Activated CD4-positive, alpha-beta T cell treated with anti-CD3 and anti-CD28 coated beads for 36 hours (primary cell): ENCODE measurements at regions of chr16 and their contacts with region 1.

Region 1: GRCh38 chr16:84970447-84971127 is 40.7 kb downstream of the ZDHHC7 start:
- DNase-seq: peak; percentile 91
- ATAC-seq: peak; percentile 99
- H3K4me3 Mint-ChIP-seq: no peak overlapping the region
- H3K27ac Mint-ChIP-seq: no peak overlapping the region
- H3K4me1 Mint-ChIP-seq: peaks cover 4% of the 10 kb centered on the region
- H3K27me3 Mint-ChIP-seq: no peaks in the 10 kb centered on the region

Region 2: GRCh38 chr16:84672276-84673202 is 298.0 kb before region 1 on chr16:
- CTCF ChIA-PET with region 1: interaction called, 4 read pairs
- POLR2A ChIA-PET with region 1: no interaction called
- intact Hi-C with region 1: loop called in 1 of 2 experiments (anchors 5 kb)
- DNase-seq: peak; percentile 91
- ATAC-seq: peak; percentile 96
- H3K4me3 Mint-ChIP-seq: no peak overlapping the region
- H3K27ac Mint-ChIP-seq: no peak overlapping the region
- H3K4me1 Mint-ChIP-seq: peaks cover 7% of the 10 kb centered on the region
- H3K27me3 Mint-ChIP-seq: peaks cover 3% of the 10 kb centered on the region

Region 3: GRCh38 chr16:84754353-84754856 is 216.2 kb before region 1 on chr16:
- CTCF ChIA-PET with region 1: interaction called, 49 read pairs
- POLR2A ChIA-PET with region 1: no interaction called
- intact Hi-C with region 1: loop called (anchors 1 to 5 kb)
- DNase-seq: peak; percentile 76
- ATAC-seq: peak; percentile 78
- H3K4me3 Mint-ChIP-seq: no peak overlapping the region
- H3K27ac Mint-ChIP-seq: peak overlapping the region; percentile 49
- H3K4me1 Mint-ChIP-seq: peaks cover 84% of the 10 kb centered on the region
- H3K27me3 Mint-ChIP-seq: no peaks in the 10 kb centered on the region

Region 4: DNA sequence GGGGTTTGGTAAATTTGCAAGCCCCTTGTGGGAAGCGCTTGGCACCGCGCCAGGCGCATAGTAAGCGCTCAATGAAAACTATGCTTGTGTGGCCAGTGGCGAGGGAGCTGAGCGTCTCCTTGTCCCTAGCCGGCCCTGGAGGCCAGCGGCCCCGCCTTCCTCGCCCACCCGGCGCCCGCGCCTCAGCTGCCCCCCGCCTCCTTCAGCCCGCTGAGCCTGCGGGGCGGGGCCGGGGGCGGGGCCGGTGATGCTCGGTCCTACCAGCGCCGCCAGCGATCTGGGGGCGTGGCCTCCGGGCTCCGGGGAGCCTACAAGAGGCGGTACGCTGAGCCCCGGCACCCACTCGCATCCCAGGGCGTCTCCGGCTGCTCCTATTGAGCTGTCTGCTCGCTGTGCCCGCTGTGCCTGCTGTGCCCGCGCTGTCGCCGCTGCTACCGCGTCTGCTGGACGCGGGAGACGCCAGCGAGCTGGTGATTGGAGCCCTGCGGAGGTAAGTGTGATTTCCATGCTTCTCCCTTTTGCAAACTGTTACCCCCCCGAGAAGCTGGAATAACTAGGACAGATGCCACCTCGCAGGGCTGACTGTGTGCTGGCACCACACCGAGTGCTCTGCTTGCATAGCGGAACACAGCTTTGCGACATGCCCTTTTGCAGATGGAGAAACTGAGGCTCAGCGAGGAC is 150.8 kb before region 1 on chr16 and contains the start of gene CRISPLD2:
- CTCF ChIA-PET with region 1: interaction called, 3 read pairs
- POLR2A ChIA-PET with region 1: no interaction called
- intact Hi-C with region 1: loop called in 1 of 2 experiments (anchors 5 kb)
- DNase-seq: peak; percentile 93
- ATAC-seq: peak; percentile 100
- H3K4me3 Mint-ChIP-seq: peak within 1 kb of the TSS; percentile 58
- H3K27ac Mint-ChIP-seq: no peak within 1 kb of the TSS
- H3K4me1 Mint-ChIP-seq: peaks cover 8% of the 10 kb centered on the region
- H3K27me3 Mint-ChIP-seq: peaks cover 13% of the 10 kb centered on the region
- total RNA-seq, gene CRISPLD2: 0.05 to 0.11 TPM

Region 5: DNA sequence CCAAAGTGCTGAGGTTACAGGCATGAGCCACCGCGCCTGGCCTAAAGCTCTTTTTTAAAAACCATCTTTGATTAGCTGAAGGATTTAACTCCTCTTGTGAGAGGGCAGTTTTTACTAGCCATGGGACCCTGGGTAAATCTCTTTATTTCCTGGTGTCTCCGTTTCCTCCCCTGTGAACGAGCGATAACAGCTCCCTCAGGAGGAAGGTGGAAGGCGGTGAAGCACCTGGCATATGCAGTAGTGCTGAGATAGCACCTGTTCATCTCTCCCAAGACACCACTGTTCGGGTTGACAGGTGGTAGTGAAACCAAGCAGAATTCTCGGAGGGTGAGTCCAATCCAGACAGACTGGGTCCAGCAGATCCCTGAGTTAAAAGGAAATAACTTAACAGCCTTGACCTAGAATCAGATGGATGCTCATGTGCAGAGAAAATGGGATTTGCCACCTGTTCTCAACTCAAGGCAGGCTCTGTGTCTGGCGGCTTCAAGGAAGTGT is 64.6 kb before region 1 on chr16:
- CTCF ChIA-PET with region 1: no interaction called
- POLR2A ChIA-PET with region 1: no interaction called
- intact Hi-C with region 1: no loop called
- DNase-seq: no peak
- ATAC-seq: no peak
- H3K4me3 Mint-ChIP-seq: no peak overlapping the region
- H3K27ac Mint-ChIP-seq: no peak overlapping the region
- H3K4me1 Mint-ChIP-seq: no peaks in the 10 kb centered on the region
- H3K27me3 Mint-ChIP-seq: no peaks in the 10 kb centered on the region

Region 6: DNA sequence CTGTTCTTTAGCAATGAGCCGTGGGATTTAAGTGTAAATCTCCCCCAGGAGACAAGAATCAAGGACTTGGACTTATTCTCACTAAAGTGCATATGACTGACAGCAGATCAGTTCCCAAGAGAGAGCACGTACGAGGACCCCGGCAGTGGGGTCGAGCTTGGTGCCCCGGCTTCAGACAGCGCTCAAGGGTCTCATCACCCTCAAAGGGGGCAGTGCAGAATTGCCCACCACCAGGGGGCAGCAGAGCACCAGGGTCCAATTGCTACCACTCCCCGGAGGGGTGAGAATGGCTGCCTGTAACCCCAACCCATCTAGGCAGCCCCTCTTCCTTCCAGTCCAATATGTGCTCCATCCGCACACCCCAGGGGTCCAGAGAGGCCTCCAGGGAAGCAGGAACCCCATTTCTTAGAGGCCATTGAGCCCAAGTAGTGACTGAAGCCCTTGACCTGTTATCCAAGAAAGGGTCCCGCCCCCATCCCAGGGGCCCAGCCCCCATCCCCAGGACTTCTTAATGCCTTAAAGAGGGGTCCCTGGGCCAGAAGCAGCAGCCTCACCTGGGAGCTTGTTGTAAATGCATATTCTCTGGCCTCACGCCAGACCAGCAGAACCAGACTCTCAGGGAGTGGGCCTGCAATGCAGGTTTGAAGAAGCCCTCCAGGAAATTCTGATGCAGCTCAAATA is 45.4 kb before region 1 on chr16:
- CTCF ChIA-PET with region 1: interaction called, 57 read pairs
- POLR2A ChIA-PET with region 1: no interaction called
- intact Hi-C with region 1: loop called (anchors 1 kb)
- DNase-seq: peak; percentile 86
- ATAC-seq: peak; percentile 77
- H3K4me3 Mint-ChIP-seq: no peak overlapping the region
- H3K27ac Mint-ChIP-seq: no peak overlapping the region
- H3K4me1 Mint-ChIP-seq: no peaks in the 10 kb centered on the region
- H3K27me3 Mint-ChIP-seq: no peaks in the 10 kb centered on the region

Region 7: GRCh38 chr16:84952335-84953189 is 18.0 kb before region 1 on chr16:
- CTCF ChIA-PET with region 1: interaction called, 108 read pairs
- POLR2A ChIA-PET with region 1: no interaction called
- intact Hi-C with region 1: no loop called
- DNase-seq: peak; percentile 79
- ATAC-seq: peak; percentile 91
- H3K4me3 Mint-ChIP-seq: no peak overlapping the region
- H3K27ac Mint-ChIP-seq: no peak overlapping the region
- H3K4me1 Mint-ChIP-seq: no peaks in the 10 kb centered on the region
- H3K27me3 Mint-ChIP-seq: no peaks in the 10 kb centered on the region

Region 8: GRCh38 chr16:84985079-84986065 is 14.8 kb after region 1 on chr16:
- CTCF ChIA-PET with region 1: interaction called, 14 read pairs
- POLR2A ChIA-PET with region 1: no interaction called
- intact Hi-C with region 1: no loop called
- DNase-seq: no peak
- ATAC-seq: no peak
- H3K4me3 Mint-ChIP-seq: peak overlapping the region; percentile 21
- H3K27ac Mint-ChIP-seq: peak overlapping the region; percentile 72
- H3K4me1 Mint-ChIP-seq: peaks cover 20% of the 10 kb centered on the region
- H3K27me3 Mint-ChIP-seq: no peaks in the 10 kb centered on the region